ENCODE measurements at regions of chr4 and their contacts with region 1.

Region 1: GRCh38 chr4:74370912-74371311 is 6.0 kb downstream of the EREG start:
- DNase-seq: peak; percentile 41
- ATAC-seq: peak; percentile 89
- H3K4me3 Mint-ChIP-seq: no peak overlapping the region
- H3K27ac Mint-ChIP-seq: no peak overlapping the region
- H3K4me1 Mint-ChIP-seq: peaks cover 2% of the 10 kb centered on the region
- H3K27me3 Mint-ChIP-seq: peaks cover 2% of the 10 kb centered on the region
- CTCF ChIP-seq: peak; percentile 51

Region 2: GRCh38 chr4:74531963-74532794 is 161.3 kb after region 1 on chr4:
- CTCF ChIA-PET with region 1: interaction called, 36 read pairs
- POLR2A ChIA-PET with region 1: no interaction called
- intact Hi-C with region 1: loop called (anchors 5 kb)
- DNase-seq: peak; percentile 11
- ATAC-seq: peak; percentile 47
- H3K4me3 Mint-ChIP-seq: no peak overlapping the region
- H3K27ac Mint-ChIP-seq: no peak overlapping the region
- H3K4me1 Mint-ChIP-seq: no peaks in the 10 kb centered on the region
- H3K27me3 Mint-ChIP-seq: no peaks in the 10 kb centered on the region
- CTCF ChIP-seq: peak; percentile 50

Region 3: GRCh38 chr4:74623041-74623440 is 252.1 kb after region 1 on chr4:
- CTCF ChIA-PET with region 1: interaction called, 11 read pairs
- POLR2A ChIA-PET with region 1: no interaction called
- intact Hi-C with region 1: no loop called
- DNase-seq: peak; percentile 33
- ATAC-seq: peak; percentile 70
- H3K4me3 Mint-ChIP-seq: no peak overlapping the region
- H3K27ac Mint-ChIP-seq: no peak overlapping the region
- H3K4me1 Mint-ChIP-seq: peaks cover 23% of the 10 kb centered on the region
- H3K27me3 Mint-ChIP-seq: peaks cover 1% of the 10 kb centered on the region
- CTCF ChIP-seq: peak; percentile 62

Measured in activated CD8-positive, alpha-beta T cell treated with anti-CD3 and anti-CD28 coated beads for 36 hours (primary cell).